Right ventricle myocardium superior (tissue), 1 donor: ENCODE measurements at regions of chr17 and their contacts with region 1.

Region 1: DNA sequence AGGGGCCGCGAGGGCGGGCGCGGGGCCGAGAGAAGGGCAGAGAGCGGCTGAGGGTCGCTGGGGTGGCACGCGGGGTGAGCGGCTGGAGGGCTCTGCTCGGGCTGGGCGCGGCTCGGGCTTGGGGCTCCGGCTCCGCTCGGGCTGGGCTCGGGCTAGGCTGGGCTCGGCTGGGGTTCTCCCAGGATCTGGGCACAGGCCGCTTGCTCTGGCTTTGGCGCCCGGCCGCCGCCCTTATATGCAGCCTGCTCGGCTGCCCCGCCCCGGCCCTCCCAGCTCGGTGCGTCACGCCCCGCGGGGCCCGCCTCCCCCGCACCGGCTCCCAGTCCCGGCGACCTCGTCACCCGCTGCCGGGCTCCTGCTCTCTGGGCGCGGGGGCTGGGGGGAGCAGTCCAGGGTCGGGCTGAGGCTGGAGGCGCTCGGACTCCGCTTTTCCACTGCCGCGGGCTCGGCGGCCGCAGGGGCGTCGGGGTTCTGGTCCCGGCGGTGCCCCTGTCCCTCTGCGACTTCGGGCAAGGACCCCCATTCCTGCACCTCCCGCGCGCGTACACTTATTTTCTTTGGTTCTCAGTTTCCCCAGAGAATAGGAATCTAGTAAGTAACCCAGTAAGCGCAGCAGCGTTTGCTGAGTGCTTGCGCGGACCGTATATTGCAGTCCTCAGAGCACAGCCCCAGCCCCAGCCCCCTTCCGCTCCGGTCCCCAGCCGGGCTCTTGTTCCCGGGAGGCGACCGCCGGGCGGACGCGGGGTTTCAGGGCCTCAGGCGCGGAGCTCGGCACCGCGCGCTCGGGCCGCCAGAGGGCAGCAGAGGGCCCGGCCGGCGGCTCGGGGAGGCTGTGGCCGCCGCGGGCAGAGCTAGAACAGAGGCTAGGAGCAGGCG is at the start of gene RASD1:
- DNase-seq: peak; percentile 94
- ATAC-seq: peak; percentile 89
- total RNA-seq, gene RASD1: 39.8 TPM

Region 2: GRCh38 chr17:17191346-17191792 is 305.1 kb before region 1 on chr17:
- intact Hi-C with region 1: no loop called
- DNase-seq: peak; percentile 71
- ATAC-seq: peak; percentile 80

Region 3: GRCh38 chr17:17363638-17364337 is 132.6 kb before region 1 on chr17:
- intact Hi-C with region 1: loop called (anchors 5 kb)
- DNase-seq: peak; percentile 30
- ATAC-seq: no peak

Region 4: DNA sequence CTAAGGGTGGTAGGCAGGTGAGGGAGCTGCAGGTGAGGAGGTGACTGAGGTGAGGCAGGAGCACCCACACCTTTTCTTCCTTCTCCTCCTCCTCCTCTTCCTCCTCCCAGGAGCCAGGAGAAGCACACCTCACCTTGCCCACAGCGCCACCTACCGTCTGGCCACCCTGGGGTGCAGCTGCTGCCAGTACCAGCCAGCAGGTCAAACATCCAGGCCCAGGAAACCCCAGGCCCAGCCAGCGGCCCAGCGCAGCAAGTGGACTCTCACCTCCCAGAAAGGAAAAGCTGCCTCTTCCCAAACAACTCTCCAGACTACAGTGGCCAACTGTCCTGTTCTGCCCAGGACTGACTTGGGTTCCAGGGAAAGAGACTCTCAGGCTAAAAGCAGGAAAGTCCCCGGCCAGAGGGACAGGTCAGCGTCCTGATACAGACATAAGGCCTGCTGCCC is 72.3 kb after region 1 on chr17:
- intact Hi-C with region 1: loop called (anchors 2 kb)
- DNase-seq: peak; percentile 86
- ATAC-seq: peak; percentile 54

Region 5: GRCh38 chr17:17641621-17642409 is 145.4 kb after region 1 on chr17:
- intact Hi-C with region 1: loop called (anchors 10 kb)
- DNase-seq: peak; percentile 80
- ATAC-seq: peak; percentile 94